Sciatic nerve (tissue), 2 donors: ENCODE measurements at regions of chr20 and their contacts with region 1.

Region 1: GRCh38 chr20:51725380-51726203 is 42.6 kb downstream of the ATP9A start:
- DNase-seq: no peak
- ATAC-seq: no peak

Region 2: GRCh38 chr20:50680412-50680908 is 1045.1 kb before region 1 on chr20:
- intact Hi-C with region 1: no loop called
- DNase-seq: no peak
- ATAC-seq: peak; percentile 95

Region 3: DNA sequence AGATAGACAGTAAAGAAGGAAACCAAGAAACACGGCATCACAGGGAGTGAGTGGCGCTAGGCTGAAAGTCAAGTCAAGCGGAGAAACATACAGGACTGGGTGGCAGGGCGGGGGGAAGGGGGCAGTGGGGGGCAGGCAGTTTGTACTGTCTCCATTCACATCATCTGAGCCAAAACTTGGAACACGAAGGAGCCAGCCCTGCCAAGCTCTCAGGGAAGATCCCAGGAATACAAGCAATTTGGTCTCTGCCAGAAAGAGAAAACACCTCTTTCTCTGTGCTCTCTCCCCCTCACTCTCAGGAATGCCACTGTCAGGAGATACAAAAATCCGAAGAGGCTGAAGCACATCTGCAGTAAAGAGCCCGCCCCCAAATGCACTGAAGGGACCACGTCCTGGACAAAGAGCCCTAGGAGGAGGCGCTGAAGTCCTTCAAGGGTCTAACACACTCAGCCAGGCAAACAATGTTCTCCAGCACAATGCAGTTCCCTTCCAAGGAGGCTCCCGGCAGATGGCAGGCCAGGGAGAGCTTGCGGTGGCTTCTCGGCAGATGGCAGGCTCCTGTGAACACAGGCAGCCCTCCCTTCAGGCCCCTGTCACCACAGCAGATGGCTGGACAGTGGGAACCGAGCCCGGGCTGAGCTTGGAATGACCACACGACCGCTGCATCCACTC is 47.4 kb before region 1 on chr20:
- intact Hi-C with region 1: no loop called
- DNase-seq: no peak
- ATAC-seq: peak; percentile 77

Region 4: DNA sequence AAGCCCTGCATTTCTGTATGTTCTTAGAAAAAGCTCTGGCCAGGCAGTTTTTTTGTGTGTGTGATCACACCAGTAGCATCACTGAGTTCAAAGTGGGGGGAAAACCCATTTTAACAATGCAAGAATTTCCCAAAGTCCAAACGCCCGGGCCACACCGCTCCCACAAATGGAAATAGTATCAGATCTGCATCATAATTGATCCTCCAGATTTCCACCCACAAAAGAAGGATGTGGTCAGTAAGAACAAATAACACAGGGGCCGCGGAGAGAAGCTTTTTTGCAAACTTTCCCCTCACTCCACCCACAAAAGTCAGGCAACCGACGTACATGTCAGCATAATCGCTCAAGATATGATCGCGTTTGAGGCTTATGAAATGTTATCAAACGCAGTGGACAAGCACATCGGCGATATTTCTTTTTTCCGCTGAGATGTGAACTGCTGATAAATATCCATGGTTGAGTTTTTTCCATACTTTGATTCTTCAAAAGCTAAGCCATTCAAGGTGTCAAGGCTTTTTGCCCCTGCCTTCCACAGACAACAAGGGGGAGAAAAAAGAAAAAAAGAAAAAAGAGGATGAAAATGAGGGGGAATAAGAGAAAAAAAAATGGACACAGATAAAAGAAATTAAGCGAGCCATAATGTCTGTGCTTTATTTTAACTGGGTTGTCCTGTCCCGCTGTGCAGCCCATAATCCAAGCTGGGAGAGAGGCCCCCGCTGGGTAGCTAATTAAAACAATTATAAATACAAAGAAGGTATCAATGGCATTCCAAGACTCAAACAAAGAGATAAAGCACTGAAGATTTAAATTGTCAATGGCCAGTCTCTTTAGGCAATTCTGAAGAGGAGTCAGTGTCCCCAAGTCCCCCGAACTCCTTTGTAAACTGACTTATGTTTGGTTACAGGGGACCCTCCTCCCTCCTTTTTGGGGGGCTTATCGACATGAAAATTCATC is 322.5 kb after region 1 on chr20:
- intact Hi-C with region 1: loop called (anchors 10 kb)
- DNase-seq: no peak
- ATAC-seq: no peak